ENCODE measurements at regions of chr10 and their contacts with region 1.

Region 1: DNA sequence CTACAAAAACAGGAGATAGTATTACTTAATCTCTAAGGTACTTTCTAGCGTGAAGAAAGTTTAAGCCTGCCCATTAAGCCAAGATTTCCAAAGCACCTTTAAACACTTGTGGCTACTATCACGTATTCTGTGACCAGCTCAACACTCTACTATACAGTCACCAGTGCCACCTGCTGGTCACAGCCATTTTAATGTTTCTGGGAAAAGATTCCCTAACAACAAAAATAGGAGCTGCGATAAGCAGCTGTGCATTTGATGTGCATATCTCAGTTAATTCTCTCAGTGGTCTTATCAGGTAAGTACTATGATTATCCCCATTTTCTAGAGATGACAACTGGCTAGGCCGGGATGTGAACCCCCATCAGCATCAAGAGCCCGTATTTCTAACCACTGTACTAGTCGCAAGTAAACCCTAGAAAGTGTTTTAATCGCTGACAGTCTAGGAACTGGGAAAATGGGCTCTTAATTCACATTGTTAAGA is 860 bp downstream of the SEC31B start:
- DNase-seq: peak; percentile 55 to 91 (median 76)
- H3K4me3 ChIP-seq: peak overlapping the region in 1 of 4 donors; percentile 48
- H3K27ac ChIP-seq: no peak overlapping the region
- H3K4me1 ChIP-seq: peaks cover 0 to 13% of the 10 kb centered on the region in 2 donors
- H3K27me3 ChIP-seq: no peaks in the 10 kb centered on the region
- CTCF ChIP-seq: peak; percentile 48 to 78 (median 74)
- POLR2A ChIP-seq: no peak

Region 2: DNA sequence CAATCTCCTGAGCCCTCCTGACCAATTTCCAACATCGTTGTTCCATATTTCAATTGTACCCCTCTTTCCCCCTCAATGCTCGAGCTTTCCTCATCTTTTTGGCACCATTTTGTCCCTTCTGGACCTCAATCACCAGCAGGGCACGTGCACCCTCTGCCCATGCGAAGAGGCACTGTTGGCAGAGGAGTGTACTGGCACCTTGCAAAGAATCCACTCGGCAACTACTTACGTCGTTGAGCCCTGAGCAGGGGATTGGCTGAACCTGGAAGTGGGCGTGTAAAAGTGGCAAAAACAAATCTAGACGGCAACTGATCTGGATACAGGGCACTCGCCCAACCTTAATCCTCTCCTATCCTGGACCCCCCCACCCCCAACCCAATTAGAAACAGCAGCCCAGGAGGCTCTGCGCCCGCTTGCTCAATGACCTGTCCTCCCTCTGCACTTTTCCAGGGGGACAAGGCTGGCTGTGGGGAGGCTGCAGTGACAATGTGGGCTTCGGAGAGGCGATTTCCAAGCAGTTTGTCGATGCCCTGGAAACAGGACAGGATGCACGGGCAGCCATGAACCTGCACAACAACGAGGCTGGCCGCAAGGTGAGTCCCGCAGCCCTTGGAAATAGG is 37.2 kb before region 1 on chr10:
- intact Hi-C with region 1: loop called in 1 of 2 experiments (anchors 5 kb)
- DNase-seq: peak; percentile 77 to 98 (median 88)
- H3K4me3 ChIP-seq: peak overlapping the region in 1 of 4 donors; percentile 44
- H3K27ac ChIP-seq: no peak overlapping the region
- H3K4me1 ChIP-seq: peaks cover 8 to 13% of the 10 kb centered on the region in 2 donors
- H3K27me3 ChIP-seq: peaks cover 22% of the 10 kb centered on the region
- CTCF ChIP-seq: no peak
- POLR2A ChIP-seq: no peak